Panc1 (cell line): ENCODE measurements at regions of chr4 and their contacts with region 1.

Region 1: DNA sequence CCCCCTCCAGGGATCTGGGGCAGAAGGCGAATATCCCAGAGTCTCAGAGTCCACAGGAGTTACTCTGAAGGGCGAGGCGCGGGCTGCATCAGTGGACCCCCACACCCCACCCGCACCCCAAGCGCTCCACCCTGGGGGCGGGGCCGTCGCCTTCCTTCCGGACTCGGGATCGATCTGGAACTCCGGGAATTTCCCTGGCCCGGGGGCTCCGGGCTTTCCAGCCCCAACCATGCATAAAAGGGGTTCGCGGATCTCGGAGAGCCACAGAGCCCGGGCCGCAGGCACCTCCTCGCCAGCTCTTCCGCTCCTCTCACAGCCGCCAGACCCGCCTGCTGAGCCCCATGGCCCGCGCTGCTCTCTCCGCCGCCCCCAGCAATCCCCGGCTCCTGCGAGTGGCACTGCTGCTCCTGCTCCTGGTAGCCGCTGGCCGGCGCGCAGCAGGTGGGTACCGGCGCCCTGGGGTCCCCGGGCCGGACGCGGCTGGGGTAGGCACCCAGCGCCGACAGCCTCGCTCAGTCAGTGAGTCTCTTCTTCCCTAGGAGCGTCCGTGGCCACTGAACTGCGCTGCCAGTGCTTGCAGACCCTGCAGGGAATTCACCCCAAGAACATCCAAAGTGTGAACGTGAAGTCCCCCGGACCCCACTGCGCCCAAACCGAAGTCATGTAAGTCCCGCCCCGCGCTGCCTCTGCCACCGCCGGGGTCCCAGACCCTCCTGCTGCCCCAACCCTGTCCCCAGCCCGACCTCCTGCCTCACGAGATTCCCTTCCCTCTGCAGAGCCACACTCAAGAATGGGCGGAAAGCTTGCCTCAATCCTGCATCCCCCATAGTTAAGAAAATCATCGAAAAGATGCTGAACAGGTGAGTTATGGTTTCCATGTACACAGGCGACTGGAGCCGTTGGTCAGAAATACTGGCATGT is at the start of gene CXCL1:
- DNase-seq: no peak
- ATAC-seq: peak; percentile 76
- H3K4me3 ChIP-seq: peak within 1 kb of the TSS; percentile 54 to 79
- H3K27ac ChIP-seq: peak within 1 kb of the TSS; percentile 64
- H3K4me1 ChIP-seq: peaks cover 5% of the 10 kb centered on the region
- H3K27me3 ChIP-seq: no peaks in the 10 kb centered on the region
- CTCF ChIP-seq: no peak; the same call in 1 of the 2 replicates
- total RNA-seq, gene CXCL1: 12.8 TPM

Region 2: GRCh38 chr4:73662709-73663546 is 206.5 kb before region 1 on chr4:
- CTCF ChIA-PET with region 1: no interaction called
- POLR2A ChIA-PET with region 1: interaction called, 3 read pairs
- in situ Hi-C with region 1: no loop called
- intact Hi-C with region 1: loop called (anchors 5 kb)
- DNase-seq: no peak
- ATAC-seq: peak; percentile 79
- H3K4me3 ChIP-seq: no peak overlapping the region
- H3K27ac ChIP-seq: peak overlapping the region; percentile 63; the same call in 1 of the 2 replicates
- H3K4me1 ChIP-seq: no peaks in the 10 kb centered on the region
- H3K27me3 ChIP-seq: no peaks in the 10 kb centered on the region
- CTCF ChIP-seq: peak; percentile 55

Region 3: GRCh38 chr4:73729534-73730165 is 139.7 kb before region 1 on chr4:
- CTCF ChIA-PET with region 1: no interaction called
- POLR2A ChIA-PET with region 1: no interaction called
- in situ Hi-C with region 1: no loop called
- intact Hi-C with region 1: loop called (anchors 2 kb)
- DNase-seq: peak; percentile 38
- ATAC-seq: peak; percentile 92
- H3K4me3 ChIP-seq: no peak overlapping the region
- H3K27ac ChIP-seq: peak overlapping the region; percentile 60
- H3K4me1 ChIP-seq: no peaks in the 10 kb centered on the region
- H3K27me3 ChIP-seq: no peaks in the 10 kb centered on the region
- CTCF ChIP-seq: peak; percentile 79

Region 4: GRCh38 chr4:73917081-73917501 is 47.7 kb after region 1 on chr4:
- CTCF ChIA-PET with region 1: no interaction called
- POLR2A ChIA-PET with region 1: no interaction called
- in situ Hi-C with region 1: no loop called
- intact Hi-C with region 1: loop called (anchors 5 kb)
- DNase-seq: no peak
- ATAC-seq: peak; percentile 85
- H3K4me3 ChIP-seq: no peak overlapping the region
- H3K27ac ChIP-seq: peak overlapping the region; percentile 42
- H3K4me1 ChIP-seq: peaks cover 5% of the 10 kb centered on the region; the same call in 1 of the 2 replicates
- H3K27me3 ChIP-seq: no peaks in the 10 kb centered on the region
- CTCF ChIP-seq: no peak